ENCODE measurements at regions of chr16 and their contacts with region 1.

Region 1: DNA sequence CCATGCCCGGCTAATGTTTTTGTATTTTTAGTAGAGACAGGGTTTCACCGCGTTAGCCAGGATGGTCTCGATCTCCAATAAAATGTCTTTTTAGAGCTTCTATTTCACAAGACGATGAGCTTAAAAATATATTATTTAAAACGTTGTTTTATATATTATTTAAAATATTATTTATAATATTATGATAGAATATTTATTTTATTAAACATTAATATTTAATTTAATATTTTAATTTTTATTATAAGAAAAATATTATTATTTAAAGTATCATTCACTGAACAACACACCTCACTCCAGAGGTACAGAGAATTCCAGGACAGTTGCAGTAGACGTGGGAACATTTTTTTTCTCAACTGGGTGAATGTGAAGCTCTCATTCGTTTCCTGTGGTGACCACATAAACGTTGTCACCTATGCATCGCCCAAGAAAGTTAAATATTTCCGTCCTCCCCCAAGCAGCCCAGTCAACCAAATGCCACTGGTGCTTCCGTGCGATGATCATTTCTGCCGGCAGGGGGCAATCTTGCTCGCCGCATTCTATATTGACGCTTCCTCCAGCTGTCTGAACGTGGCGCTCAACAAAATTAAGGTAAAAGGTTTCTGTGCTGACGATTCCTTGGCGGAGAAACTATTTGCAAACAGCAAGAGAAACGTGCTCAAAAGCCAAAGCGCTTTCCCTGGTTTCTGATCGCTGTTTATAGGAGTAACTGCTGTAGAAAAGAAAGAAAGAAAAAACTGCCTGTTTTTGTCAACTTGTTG is 41.7 kb upstream of the PRSS54 start:
- H3K4me3 ChIP-seq: no peak overlapping the region
- H3K27ac ChIP-seq: no peak overlapping the region
- H3K4me1 ChIP-seq: no peaks in the 10 kb centered on the region
- CTCF ChIP-seq: peak; percentile 92

Region 2: DNA sequence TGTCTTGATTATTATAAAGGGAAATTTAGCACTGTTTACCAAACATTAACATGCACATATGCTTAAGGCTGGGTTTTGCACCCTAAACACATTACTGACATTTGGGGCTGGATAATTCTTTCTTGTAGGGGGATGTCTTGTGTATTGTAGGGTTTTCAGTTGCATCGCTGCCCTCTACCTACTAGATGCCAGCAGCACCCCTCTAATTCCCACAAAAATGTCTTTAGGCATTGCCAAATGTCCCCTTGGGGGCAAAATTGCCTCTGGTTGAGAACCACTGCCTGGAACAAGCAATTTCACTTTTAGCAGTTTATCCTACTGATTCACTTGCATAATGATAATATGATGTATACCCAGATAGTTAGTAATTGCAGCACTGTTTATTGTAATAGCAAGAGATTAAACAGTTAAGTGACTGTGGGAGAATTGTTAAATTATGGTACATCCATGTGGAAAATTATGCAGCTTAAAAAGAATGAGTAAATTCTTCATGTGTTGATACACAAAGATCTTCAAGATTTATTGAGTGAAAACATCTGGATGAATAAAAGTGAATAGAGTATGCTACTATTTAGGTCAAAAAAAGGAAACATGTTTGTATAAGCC is 60.1 kb before region 1 on chr16:
- CTCF ChIA-PET with region 1: no interaction called
- POLR2A ChIA-PET with region 1: no interaction called
- H3K4me3 ChIP-seq: no peak overlapping the region
- H3K27ac ChIP-seq: no peak overlapping the region
- H3K4me1 ChIP-seq: no peaks in the 10 kb centered on the region
- CTCF ChIP-seq: no peak

Region 3: DNA sequence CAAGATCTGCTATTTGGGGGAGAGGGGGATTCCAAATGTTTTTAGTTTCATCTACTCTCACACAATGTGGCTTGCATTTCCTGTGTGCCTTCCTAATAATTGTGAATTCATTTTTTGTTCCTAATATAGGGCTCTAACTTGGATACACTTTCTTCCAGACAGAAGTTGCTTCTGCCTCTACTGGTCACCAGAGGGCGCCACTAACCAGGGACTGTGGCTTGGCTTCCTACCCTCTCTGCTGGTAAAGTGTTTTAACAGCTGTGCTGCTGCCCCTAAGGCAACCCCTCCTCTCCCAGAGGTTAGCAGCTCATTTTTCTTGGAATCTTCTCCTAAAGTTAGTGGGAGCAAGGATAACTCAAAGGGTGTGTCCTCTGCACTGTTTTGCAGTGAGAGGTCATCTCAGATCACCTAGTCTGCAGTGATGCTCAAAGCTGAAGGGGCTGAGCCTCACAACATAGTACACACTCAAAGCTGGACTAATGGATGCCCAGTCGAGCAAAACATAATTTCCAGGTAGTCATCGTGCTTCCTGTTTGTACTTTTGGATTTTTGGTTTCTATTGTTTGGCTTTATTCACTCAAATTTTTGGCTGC is 36.7 kb before region 1 on chr16:
- CTCF ChIA-PET with region 1: interaction called, 27 read pairs
- POLR2A ChIA-PET with region 1: interaction called, 3 read pairs
- H3K4me3 ChIP-seq: no peak overlapping the region
- H3K27ac ChIP-seq: no peak overlapping the region
- H3K4me1 ChIP-seq: no peaks in the 10 kb centered on the region
- CTCF ChIP-seq: no peak

Region 4: GRCh38 chr16:58494981-58495520 is 158.5 kb after region 1 on chr16:
- CTCF ChIA-PET with region 1: interaction called, 18 read pairs
- POLR2A ChIA-PET with region 1: no interaction called
- H3K4me3 ChIP-seq: no peak overlapping the region
- H3K27ac ChIP-seq: no peak overlapping the region
- H3K4me1 ChIP-seq: 0 out of 2 replicates have a peak, but pooled peaks cover under 1% of the 10 kb centered on the region
- CTCF ChIP-seq: peak; percentile 66

Region 5: GRCh38 chr16:58661199-58661830 is 324.8 kb after region 1 on chr16:
- CTCF ChIA-PET with region 1: interaction called, 14 read pairs
- POLR2A ChIA-PET with region 1: no interaction called
- H3K4me3 ChIP-seq: no peak overlapping the region
- H3K27ac ChIP-seq: no peak overlapping the region
- H3K4me1 ChIP-seq: no peaks in the 10 kb centered on the region
- CTCF ChIP-seq: peak; percentile 66

Measured in HEK293 (cell line).